Prostate gland (tissue), 2 donors: ENCODE measurements at regions of chr2 and their contacts with region 1.

Region 1: DNA sequence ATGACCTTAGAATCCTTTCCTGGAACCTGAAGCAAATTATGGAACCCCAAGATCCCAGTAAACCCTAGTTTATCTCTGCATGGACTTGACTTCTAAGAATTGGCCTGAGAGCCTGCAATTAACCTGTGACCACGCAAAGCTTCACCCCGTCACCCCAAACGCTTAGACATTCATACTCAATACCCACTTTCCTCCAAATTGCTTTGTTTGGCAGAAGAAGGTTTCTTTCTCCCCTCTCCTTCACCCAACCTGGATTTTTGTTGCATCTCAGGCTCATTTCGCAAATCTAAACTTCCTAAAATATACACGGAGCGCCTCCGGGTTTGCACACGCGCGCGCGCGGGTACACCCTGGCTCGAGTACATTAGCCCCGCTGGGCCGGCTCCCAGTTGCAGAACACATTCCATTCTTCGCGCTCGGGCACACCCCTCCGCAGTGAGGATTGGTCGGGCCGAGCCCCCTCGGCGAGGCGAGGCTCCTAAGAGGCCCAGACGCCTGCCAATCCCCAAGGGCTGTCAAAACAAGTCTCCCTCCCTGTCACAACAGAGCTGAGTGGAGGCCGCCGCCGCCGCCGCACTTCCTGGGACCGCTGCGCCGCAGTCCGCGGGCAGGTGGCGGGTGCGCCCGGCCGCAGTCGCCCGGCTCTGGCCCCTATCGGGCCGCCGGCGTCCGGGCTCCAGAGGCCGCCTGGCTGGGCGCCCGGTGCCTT is at the start of gene PLCL1:
- DNase-seq: peak; percentile 94
- H3K4me3 ChIP-seq: peak within 1 kb of the TSS; percentile 70 to 75
- H3K27ac ChIP-seq: peak within 1 kb of the TSS; percentile 68 to 74
- H3K4me1 ChIP-seq: peaks cover 4% of the 10 kb centered on the region
- H3K27me3 ChIP-seq: no peaks in the 10 kb centered on the region
- CTCF ChIP-seq: peak in 2 of 4 experiments; percentile 32 to 34
- POLR2A ChIP-seq: peak; percentile 83
- total RNA-seq, gene PLCL1: 6.7 to 6.8 TPM

Region 2: DNA sequence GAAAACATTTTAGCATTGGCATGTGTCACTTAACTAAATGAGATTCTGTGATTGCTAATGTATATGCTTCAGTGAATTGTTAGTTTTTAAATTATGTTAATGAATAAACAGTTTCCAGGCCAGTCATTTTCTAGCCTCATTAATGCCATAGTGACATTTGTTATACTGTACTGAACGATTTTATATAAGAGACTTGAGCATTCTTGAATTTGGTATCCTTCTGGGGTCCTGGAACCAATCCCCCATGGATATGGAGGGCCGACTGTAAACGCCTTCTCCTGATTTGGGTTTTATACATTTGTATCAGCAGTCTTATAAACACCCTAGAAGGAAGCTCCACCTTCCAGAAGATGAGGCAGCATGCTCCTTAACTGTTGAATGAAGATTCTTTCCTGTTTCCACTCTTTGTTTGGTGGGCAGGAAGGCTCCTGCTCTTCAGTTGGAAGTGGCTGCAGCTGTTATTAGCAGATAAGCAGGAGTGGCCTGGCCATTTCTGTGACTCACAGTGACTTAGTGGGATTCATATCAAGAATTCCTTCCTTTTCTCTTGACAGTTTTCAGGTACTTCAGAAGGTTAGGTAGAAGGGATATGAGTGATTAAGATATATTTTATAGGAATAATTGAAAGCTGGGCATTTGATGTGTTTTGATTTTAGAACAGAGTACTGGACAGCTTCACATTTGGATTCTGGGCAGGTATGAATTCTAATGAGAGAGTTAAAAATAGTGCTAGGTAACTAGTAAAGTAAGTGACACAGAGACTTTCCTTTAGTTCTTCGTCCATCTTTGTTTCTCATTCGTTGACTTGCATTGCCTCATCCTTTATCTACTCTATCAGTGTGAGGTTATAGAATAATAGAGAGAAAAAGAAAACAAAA is 125.0 kb after region 1 on chr2:
- intact Hi-C with region 1: loop called (anchors 10 kb)
- DNase-seq: no peak
- H3K4me3 ChIP-seq: no peak overlapping the region
- H3K27ac ChIP-seq: no peak overlapping the region
- H3K4me1 ChIP-seq: no peaks in the 10 kb centered on the region
- H3K27me3 ChIP-seq: no peaks in the 10 kb centered on the region
- CTCF ChIP-seq: no peak
- POLR2A ChIP-seq: no peak

Region 3: DNA sequence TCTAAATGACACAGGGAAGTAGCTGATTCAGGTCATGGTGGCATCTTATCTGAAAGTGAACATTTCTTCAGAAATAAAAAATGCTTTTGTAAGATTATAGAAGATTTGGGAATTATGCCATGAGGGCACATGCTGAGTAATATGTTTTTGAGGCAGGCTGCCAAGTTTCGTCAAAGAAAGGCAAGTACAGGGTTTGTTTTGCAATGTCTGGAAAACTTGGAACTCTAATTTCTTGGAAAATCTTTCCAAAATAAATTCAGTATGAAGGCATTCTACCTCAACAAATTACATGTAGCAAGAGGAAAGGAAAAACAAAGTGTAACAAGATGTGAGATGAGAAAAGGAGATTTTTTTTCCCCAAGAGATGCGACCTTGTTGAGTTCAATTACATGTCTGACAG is 167.9 kb after region 1 on chr2:
- intact Hi-C with region 1: loop called (anchors 10 kb)
- DNase-seq: no peak
- H3K4me3 ChIP-seq: no peak overlapping the region
- H3K27ac ChIP-seq: no peak overlapping the region
- H3K4me1 ChIP-seq: no peaks in the 10 kb centered on the region
- H3K27me3 ChIP-seq: no peaks in the 10 kb centered on the region
- CTCF ChIP-seq: no peak
- POLR2A ChIP-seq: no peak

Region 4: GRCh38 chr2:197986977-197987376 is 182.8 kb after region 1 on chr2:
- intact Hi-C with region 1: no loop called
- DNase-seq: no peak
- H3K4me3 ChIP-seq: no peak overlapping the region
- H3K27ac ChIP-seq: no peak overlapping the region
- H3K4me1 ChIP-seq: no peaks in the 10 kb centered on the region
- H3K27me3 ChIP-seq: no peaks in the 10 kb centered on the region
- CTCF ChIP-seq: no peak
- POLR2A ChIP-seq: no peak

Region 5: DNA sequence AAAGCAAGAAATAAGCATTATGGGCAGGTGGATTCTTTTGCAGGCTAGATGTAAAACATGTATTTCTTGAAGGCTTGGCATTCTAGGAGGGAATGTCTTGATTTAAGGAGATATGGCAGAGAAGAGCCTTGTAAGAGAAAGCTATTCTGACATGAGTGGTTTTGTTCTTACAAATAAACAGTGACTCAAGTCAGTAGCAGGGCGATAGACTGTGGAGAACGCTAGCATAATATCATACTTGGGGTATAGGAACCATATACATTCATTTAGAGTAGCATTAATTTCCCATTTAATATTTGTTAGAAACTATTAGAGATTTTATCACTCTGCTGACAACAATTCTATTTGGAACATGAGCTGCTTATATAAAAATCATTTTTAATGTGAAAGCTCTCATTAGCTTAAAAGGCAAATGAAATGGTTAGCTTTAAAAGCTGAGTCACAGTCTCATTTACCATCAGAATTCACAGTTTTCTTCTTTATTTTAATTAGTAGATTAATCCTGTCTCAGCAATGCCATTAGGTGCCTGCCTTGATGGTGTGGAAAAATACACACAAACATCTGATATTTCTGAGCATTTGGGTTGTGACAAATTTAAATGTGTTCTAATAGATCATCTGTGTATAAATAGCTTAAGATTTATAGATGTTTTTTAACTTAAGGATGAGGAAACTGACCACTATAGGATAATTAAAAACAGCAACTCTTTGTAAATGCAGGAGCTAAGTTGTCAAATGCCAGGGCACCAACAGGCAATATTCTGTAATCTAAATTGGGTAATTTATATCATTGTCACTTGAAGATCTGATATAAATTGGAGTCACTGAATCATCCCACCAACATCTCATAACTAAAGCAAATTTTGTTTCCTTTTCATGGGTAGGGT is 276.9 kb after region 1 on chr2:
- intact Hi-C with region 1: no loop called
- DNase-seq: no peak
- H3K4me3 ChIP-seq: no peak overlapping the region
- H3K27ac ChIP-seq: no peak overlapping the region
- H3K4me1 ChIP-seq: no peaks in the 10 kb centered on the region
- H3K27me3 ChIP-seq: no peaks in the 10 kb centered on the region
- CTCF ChIP-seq: no peak
- POLR2A ChIP-seq: no peak

Region 6: DNA sequence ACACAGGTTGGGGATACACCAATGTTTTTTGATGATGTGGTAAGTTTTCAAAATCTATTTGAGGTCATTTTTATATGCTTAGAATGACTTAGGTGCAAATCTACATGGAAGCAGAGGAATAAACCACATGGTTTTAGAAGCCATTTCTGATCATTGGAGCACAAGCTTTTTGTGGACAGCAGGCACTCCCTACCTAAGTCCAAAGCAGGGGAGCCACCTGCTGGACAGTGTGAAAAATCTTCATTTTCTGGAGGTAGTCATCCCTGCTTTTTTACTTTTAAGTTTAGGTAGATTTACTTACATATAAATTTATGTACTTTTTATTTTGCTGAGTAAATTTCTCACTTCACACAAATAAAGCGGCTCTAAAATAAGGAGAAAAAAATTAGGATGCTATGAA is 323.4 kb after region 1 on chr2:
- intact Hi-C with region 1: loop called (anchors 5 kb)
- DNase-seq: no peak
- H3K4me3 ChIP-seq: no peak overlapping the region
- H3K27ac ChIP-seq: no peak overlapping the region
- H3K4me1 ChIP-seq: no peaks in the 10 kb centered on the region
- H3K27me3 ChIP-seq: no peaks in the 10 kb centered on the region
- CTCF ChIP-seq: peak; percentile 10 to 66 (median 46)
- POLR2A ChIP-seq: no peak

Region 7: DNA sequence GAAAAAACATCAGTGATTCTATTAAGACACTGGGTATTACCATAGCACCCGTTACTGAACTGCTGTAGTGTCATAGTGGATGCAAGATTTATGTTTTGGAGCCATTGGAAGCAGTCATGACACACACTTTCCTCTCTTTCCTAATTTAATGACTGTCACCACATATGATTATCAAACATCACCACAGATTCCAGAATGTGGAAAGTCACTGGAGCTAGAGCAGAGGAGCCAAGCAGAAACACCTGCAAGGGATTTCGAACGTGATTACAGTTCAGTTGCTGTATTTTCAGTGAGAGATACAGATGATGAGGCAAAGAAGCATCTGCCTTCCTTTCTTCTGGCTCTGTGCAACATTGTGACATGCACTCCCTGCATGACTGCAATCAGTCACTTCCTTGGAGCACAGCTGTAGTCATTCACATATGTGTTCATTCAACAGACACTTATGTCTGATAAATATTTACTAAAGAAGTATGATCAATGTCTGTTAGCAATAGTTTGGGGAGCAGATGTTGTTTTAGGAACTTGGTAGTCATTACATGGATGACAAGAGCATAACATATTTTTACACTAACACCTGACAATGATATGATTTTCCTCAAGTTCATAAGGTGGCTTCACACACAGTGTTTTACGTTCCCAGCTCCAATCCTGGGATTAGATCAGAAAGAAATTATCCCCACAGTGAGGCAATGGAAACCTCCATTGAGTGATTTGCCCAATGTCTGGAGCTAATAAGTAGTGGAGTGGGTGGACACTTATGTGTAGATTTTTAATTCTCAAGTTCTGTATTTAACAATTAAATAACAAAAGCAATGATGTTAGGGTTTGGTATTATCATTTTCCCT is 416.8 kb after region 1 on chr2:
- intact Hi-C with region 1: loop called (anchors 10 kb)
- DNase-seq: no peak
- H3K4me3 ChIP-seq: no peak overlapping the region
- H3K27ac ChIP-seq: no peak overlapping the region
- H3K4me1 ChIP-seq: no peaks in the 10 kb centered on the region
- H3K27me3 ChIP-seq: no peaks in the 10 kb centered on the region
- CTCF ChIP-seq: no peak
- POLR2A ChIP-seq: no peak

Region 8: DNA sequence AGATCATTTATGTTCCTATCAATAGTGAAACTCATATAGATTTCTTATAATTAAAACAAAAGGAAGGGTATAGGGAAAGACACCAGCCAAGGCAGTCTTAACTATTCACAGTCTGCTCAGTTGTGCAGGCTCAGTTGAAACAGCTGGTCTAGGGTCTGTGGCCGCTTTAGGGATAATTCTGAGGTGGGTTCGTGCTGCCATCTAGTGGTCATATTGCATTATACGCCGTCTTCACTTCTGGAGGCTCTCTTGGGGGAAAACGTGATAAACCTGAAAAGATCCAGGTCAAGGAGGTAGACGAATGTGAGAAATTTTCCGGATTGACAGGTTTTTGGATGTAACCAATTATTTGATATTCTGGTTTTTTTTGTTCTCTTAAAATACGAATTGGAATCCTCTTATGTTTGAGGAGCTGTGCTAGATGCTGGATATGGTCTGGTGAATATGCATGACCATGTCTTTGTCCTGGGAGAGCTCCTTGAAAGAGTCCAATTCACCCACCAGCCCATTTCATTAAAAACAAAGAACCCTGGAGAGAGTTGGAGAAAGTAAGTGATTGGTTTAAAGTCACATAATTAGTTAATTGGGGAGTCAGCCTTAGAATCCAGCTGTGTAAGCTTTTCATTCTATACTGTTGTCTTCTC is 492.6 kb after region 1 on chr2:
- intact Hi-C with region 1: loop called (anchors 1 kb)
- DNase-seq: peak; percentile 55
- H3K4me3 ChIP-seq: no peak overlapping the region
- H3K27ac ChIP-seq: no peak overlapping the region
- H3K4me1 ChIP-seq: no peaks in the 10 kb centered on the region
- H3K27me3 ChIP-seq: no peaks in the 10 kb centered on the region
- CTCF ChIP-seq: peak; percentile 50 to 81 (median 62)
- POLR2A ChIP-seq: no peak